Activated CD4-positive, alpha-beta memory T cell treated with anti-CD3 and anti-CD28 coated beads, Interleukin-2, amount 10 ng/mL, durations not matched to agents 7 days and 5 days (primary cell): ENCODE measurements at regions of chr22 and their contacts with region 1.

Region 1: GRCh38 chr22:30191040-30191701 is 55.4 kb downstream of the LIF start:
- DNase-seq: no peak
- H3K4me3 Mint-ChIP-seq: no peak overlapping the region
- H3K27ac Mint-ChIP-seq: peak overlapping the region; percentile 80
- H3K4me1 Mint-ChIP-seq: peaks cover 95% of the 10 kb centered on the region
- H3K27me3 Mint-ChIP-seq: no peaks in the 10 kb centered on the region

Region 2: DNA sequence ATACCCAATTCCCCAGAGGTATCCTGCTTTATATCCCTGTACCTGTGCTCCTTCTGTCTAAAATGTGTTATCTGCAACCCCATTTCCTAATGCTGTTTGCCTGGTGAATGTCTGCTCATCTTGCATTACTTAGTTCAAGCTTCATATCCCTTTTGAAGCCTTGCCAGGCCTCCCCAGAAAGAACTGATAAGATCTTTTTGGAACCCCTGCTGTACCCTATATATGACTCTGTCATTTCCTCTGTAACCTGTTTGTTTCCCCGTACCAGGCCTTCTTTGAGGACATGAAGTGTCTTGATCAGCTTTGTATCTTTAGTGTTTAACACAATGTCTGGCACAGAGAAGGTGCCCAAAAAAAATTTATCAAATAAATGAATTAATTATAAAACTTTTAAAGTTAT is 22.2 kb before region 1 on chr22:
- CTCF ChIA-PET with region 1: interaction called, 3 read pairs
- POLR2A ChIA-PET with region 1: interaction called, 12 read pairs
- DNase-seq: no peak
- H3K4me3 Mint-ChIP-seq: no peak overlapping the region
- H3K27ac Mint-ChIP-seq: no peak overlapping the region
- H3K4me1 Mint-ChIP-seq: peaks cover 30% of the 10 kb centered on the region
- H3K27me3 Mint-ChIP-seq: no peaks in the 10 kb centered on the region

Region 3: DNA sequence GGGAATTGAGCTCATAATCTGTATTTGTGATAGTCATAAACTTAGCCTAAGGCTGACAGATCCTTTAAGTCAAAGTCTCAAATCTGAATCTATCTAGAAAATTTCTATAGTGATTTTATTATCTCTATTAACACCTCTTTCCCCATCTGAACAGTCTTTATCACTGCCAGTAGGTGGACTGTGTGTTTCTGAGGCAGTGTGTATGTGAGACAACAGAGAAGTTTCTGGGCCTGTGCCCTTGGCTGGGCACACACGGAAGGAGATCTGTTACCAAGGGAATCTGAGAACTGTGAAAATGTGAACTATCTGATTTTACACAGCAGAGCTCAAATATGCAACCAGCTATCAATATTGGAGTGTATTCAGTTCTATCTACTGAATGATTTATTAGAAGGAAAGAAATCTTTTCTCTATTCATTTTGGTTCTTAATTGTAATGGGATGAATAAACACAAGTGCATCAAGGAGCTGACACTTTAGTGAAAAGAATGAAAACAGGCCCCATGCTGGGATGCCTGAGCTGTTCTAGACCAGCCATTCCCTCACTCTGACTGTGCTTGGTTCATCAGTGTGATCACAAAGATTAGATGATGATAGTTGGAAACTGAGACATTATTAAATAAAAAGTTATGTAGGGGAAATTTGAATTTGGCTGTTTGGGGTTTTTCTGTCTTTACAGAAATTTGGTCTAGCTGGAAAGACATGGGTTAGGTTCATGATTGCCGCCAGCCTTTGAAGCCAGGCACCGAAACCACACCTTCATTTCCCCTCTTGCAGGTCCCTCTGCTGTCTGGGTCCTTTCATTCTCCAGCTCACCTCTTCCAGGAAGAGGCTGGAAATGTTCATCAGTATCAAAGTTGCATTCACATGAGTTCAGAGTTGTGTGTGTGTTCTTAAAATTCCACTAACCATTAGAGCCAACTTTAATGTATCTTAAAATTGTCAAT is 12.7 kb before region 1 on chr22:
- CTCF ChIA-PET with region 1: interaction called, 9 read pairs
- POLR2A ChIA-PET with region 1: interaction called, 34 read pairs
- DNase-seq: peak; percentile 48
- H3K4me3 Mint-ChIP-seq: no peak overlapping the region
- H3K27ac Mint-ChIP-seq: peak overlapping the region; percentile 91
- H3K4me1 Mint-ChIP-seq: peaks cover 80% of the 10 kb centered on the region
- H3K27me3 Mint-ChIP-seq: no peaks in the 10 kb centered on the region

Region 4: DNA sequence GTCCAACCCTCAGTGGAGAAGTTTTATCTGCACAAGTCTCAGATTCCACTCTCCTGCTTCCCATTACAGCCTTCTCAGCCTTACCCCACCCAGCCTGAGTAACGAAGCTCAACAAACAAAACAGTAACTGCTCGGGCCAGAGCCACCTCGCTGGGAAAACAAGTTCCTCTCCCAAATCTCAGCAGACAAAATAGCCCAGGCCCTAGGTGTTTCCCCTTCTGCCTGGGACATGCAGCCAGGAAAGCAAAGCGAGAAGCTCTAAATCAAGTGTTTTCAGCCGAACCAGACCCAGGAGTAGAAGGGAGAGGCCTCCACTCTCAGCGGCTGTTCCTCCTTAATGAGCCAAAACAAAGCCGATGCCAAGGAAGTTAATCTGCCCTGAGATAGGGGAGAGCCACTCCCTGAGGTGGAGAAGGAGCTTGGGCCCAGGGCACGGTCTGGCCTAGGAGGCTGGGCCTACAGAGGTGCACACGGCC is 11.4 kb after region 1 on chr22:
- CTCF ChIA-PET with region 1: no interaction called
- POLR2A ChIA-PET with region 1: interaction called, 18 read pairs
- DNase-seq: no peak
- H3K4me3 Mint-ChIP-seq: no peak overlapping the region
- H3K27ac Mint-ChIP-seq: no peak overlapping the region
- H3K4me1 Mint-ChIP-seq: peaks cover 33% of the 10 kb centered on the region
- H3K27me3 Mint-ChIP-seq: no peaks in the 10 kb centered on the region

Region 5: DNA sequence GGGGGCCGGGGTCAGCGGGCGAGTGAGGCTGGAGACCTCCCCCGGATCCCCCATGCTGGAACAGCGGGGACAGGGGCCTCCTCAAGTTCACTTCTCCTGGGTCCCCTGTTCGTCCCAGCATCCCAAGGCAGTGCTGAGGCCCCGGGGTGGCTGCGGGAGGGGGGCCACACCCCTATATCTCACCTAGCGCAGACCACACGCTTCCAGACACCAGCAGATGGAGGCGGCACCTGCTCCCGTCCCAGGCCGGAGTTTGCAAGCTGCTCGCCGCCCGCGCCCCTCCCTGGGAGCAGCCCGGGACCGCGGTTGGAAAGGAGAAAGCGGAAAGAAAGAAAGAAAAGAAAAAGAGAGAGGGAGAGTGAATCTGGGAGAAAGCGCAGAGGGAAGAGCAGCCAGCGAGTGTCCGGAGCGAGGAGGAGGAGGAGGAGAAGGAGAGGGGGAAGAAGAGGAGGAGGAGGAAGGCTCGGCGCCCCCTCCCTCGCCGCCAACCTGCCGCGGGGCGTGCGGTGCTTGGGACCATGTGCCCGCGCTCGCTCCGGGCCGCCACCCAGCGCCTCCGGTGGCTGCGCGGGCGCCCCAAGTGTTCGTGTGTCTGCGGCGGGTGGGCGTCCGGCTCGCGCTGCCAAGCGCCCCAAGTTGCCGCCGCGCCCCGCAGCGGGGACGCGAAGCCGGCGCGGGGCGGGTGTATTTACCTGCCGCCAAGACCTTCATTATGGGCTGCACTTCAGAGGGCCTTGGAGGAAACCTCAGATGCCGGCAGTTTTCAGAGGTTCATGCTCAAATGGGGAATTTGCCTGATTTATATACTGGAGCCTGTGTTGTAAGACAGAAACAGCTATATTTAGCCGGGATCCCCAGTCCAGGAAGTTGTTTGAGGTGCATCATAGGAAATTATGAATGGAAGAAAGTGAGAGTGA is 55.1 kb after region 1 on chr22 and contains the start of gene LIF:
- CTCF ChIA-PET with region 1: interaction called, 4 read pairs
- POLR2A ChIA-PET with region 1: interaction called, 11 read pairs
- DNase-seq: peak; percentile 67
- H3K4me3 Mint-ChIP-seq: peak within 1 kb of the TSS; percentile 95
- H3K27ac Mint-ChIP-seq: peak within 1 kb of the TSS; percentile 91
- H3K4me1 Mint-ChIP-seq: peaks cover 78% of the 10 kb centered on the region
- H3K27me3 Mint-ChIP-seq: no peaks in the 10 kb centered on the region
- total RNA-seq, gene LIF: 94.6 to 94.8 TPM